T-cell (primary cell): ENCODE measurements at regions of chr2 and their contacts with region 1.

Region 1: DNA sequence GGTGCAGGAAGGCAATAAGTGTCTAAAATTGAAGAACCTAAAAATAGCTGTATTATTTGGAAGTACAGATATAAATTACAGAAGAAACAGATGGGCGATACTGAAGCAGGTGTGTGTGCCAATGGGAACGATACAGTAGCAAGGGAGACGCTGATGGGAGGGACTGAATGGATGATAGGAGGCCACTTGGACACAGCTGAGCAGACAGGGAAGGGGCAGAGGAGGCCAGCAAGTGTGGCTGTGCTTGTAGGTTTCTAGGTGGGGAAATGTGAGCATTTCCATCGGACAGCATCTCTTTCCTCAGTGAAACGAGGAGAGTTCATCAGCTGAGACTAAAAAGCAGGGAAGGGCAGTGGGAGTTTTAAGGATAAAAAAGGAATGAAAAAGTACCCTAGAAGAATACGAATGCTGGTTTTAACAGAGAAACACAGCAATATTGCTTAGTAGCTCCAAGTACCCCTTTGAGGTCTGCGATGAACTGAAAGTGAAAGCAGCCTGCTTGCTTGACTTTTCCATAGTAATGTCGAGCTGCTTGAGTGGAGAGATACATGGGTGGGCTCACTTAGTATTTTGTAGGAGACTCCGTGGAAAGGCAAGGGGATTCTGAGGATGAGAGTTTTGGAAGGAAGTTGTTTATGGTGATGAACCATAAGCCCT is 91.7 kb upstream of the EPC2 start:
- DNase-seq: peak in 14 of 35 experiments; percentile 12 to 68 (median 24)
- ATAC-seq: peak; percentile 76 to 87 (median 79)
- H3K4me3 ChIP-seq: peak overlapping the region; percentile 57 to 62
- H3K4me3 Mint-ChIP-seq: no peak overlapping the region
- H3K27ac ChIP-seq: peak overlapping the region; percentile 84
- H3K27ac Mint-ChIP-seq: no peak overlapping the region
- H3K4me1 ChIP-seq: peaks cover 3 to 15% of the 10 kb centered on the region in 2 experiments
- H3K4me1 Mint-ChIP-seq: peaks cover 0 to 4% (median 0%) of the 10 kb centered on the region in 3 donors
- H3K27me3 ChIP-seq: no peaks in the 10 kb centered on the region
- H3K27me3 Mint-ChIP-seq: no peaks in the 10 kb centered on the region

Region 2: GRCh38 chr2:148524519-148524919 is 28.3 kb before region 1 on chr2:
- CTCF ChIA-PET with region 1: interaction called in 1 of 2 experiments, 12 read pairs
- POLR2A ChIA-PET with region 1: interaction called, 3 to 8 read pairs
- DNase-seq: peak in 34 of 35 experiments; percentile 38 to 87 (median 66)
- ATAC-seq: peak; percentile 88 to 93 (median 92)
- H3K4me3 ChIP-seq: no peak overlapping the region
- H3K4me3 Mint-ChIP-seq: peak overlapping the region; percentile 6 to 87 (median 37)
- H3K27ac ChIP-seq: peak overlapping the region; percentile 77
- H3K27ac Mint-ChIP-seq: peak overlapping the region; percentile 95 to 99
- H3K4me1 ChIP-seq: peaks cover 69 to 75% of the 10 kb centered on the region in 2 experiments
- H3K4me1 Mint-ChIP-seq: peaks cover 88 to 92% (median 90%) of the 10 kb centered on the region in 3 donors
- H3K27me3 ChIP-seq: no peaks in the 10 kb centered on the region
- H3K27me3 Mint-ChIP-seq: no peaks in the 10 kb centered on the region

Region 3: GRCh38 chr2:148720501-148721001 is 167.7 kb after region 1 on chr2:
- CTCF ChIA-PET with region 1: no interaction called
- POLR2A ChIA-PET with region 1: no interaction called
- DNase-seq: no peak
- ATAC-seq: peak in 2 of 4 experiments; percentile 9 to 24
- H3K4me3 ChIP-seq: peak overlapping the region in 1 of 2 donors; percentile 23
- H3K4me3 Mint-ChIP-seq: peak overlapping the region in 1 of 3 donors; percentile 33
- H3K27ac ChIP-seq: no peak overlapping the region
- H3K27ac Mint-ChIP-seq: peak overlapping the region; percentile 40 to 59
- H3K4me1 ChIP-seq: peaks cover 15 to 18% of the 10 kb centered on the region in 2 experiments
- H3K4me1 Mint-ChIP-seq: peaks cover 95 to 96% (median 96%) of the 10 kb centered on the region in 3 donors
- H3K27me3 ChIP-seq: no peaks in the 10 kb centered on the region
- H3K27me3 Mint-ChIP-seq: no peaks in the 10 kb centered on the region

Region 4: DNA sequence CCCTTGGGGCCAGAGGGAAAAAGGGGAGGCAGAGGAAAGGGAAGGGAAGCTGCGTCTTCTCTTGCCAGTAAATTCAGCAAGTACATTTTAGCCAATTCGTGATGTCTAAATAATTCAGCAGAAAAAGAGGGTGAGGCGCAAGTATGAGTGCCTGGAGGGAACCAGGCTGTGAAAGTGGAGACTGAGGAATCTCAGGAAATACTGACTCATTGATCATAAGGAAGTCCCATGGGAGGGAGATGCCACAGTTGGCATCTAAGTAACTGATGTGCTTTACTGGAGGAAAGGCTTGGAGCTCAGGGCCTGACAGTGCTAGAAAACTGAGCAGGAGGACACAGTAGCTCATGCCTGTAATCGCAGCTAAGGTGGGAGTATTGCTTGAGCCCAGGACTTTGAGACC is 353.3 kb after region 1 on chr2:
- CTCF ChIA-PET with region 1: no interaction called
- POLR2A ChIA-PET with region 1: no interaction called
- DNase-seq: no peak
- ATAC-seq: no peak
- H3K4me3 ChIP-seq: no peak overlapping the region
- H3K4me3 Mint-ChIP-seq: no peak overlapping the region
- H3K27ac ChIP-seq: no peak overlapping the region
- H3K27ac Mint-ChIP-seq: no peak overlapping the region
- H3K4me1 ChIP-seq: no peaks in the 10 kb centered on the region
- H3K4me1 Mint-ChIP-seq: peaks cover 4 to 8% (median 5%) of the 10 kb centered on the region in 3 donors
- H3K27me3 ChIP-seq: peaks cover 0 to 4% of the 10 kb centered on the region in 2 experiments
- H3K27me3 Mint-ChIP-seq: peaks cover 0 to 13% of the 10 kb centered on the region in 2 donors

Region 5: GRCh38 chr2:149399934-149400615 is 847.3 kb after region 1 on chr2:
- CTCF ChIA-PET with region 1: no interaction called
- POLR2A ChIA-PET with region 1: no interaction called
- DNase-seq: no peak
- ATAC-seq: no peak
- H3K4me3 ChIP-seq: no peak overlapping the region
- H3K4me3 Mint-ChIP-seq: no peak overlapping the region
- H3K27ac ChIP-seq: no peak overlapping the region
- H3K27ac Mint-ChIP-seq: no peak overlapping the region
- H3K4me1 ChIP-seq: no peaks in the 10 kb centered on the region
- H3K4me1 Mint-ChIP-seq: no peaks in the 10 kb centered on the region
- H3K27me3 ChIP-seq: peaks cover 0 to 6% of the 10 kb centered on the region in 2 experiments
- H3K27me3 Mint-ChIP-seq: peaks cover 3 to 12% of the 10 kb centered on the region in 2 donors